ENCODE measurements at regions of chr12 and their contacts with region 1.

Region 1: DNA sequence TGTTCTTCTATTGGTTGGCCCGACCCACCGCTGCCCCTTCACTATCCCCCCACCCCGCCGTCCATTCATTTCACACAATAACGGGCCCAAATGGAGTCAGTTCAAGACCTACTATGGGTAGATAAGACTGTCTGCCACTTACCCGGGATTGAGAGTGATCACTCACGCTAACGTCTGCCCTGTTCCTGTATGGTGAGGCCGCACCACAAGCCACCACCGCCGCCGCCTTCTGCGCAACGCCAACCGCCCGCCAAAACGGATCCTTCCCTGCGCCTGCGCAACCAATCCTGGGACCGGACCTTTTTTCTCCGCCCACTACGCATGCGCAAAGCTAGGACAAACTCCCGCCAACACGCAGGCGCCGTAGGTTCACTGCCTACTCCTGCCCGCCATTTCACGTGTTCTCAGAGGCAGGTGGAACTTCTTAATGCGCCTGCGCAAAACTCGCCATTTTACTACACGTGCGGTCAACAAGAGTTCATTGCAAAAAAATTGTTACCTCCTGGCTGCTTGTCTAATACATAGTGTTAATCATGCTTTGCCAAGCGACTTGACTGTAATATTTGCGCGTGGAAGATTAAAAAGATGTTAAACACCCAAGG is at the start of gene CBX5:
- DNase-seq: peak; percentile 97 to 100 (median 100)
- ATAC-seq: peak; percentile 48 to 52
- H3K4me3 Mint-ChIP-seq: no peak within 1 kb of the TSS
- H3K27ac Mint-ChIP-seq: no peak within 1 kb of the TSS
- H3K4me1 Mint-ChIP-seq: peaks cover 26 to 68% (median 48%) of the 10 kb centered on the region in 4 donors
- H3K27me3 Mint-ChIP-seq: no peaks in the 10 kb centered on the region
- polyA plus RNA-seq, gene CBX5: 23.7 to 34.4 (median 29.4) TPM

Region 2: DNA sequence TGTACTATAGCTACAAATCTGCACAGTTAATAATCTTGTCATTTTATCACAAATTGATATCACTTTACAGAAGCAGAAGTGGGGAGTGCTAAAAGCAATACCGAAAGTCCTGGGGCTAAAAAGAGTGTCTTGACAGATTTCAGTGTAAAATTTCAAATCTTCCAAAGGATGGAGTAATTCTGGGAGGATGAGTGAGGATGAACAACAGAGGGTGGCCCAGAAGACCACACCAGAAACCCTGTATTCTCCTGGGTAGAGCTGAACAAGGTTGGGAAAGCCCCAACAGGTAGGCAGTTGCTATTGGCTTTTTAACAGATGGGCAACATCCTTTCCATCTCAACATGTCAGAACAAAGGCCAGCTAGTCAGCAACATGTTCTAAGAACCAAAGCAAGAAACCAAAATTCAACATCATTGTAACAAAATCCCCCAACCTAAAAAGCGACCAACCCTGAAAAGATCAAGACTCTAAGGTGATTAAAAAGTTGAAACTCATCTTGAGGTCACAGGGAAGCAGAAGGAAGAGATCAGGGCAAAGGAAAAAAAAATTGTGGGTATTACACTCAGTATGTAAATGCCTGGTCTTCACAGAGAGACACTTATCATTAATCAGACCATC is 38.9 kb before region 1 on chr12:
- POLR2A ChIA-PET with region 1: no interaction called
- DNase-seq: no peak
- ATAC-seq: no peak
- H3K4me3 Mint-ChIP-seq: no peak overlapping the region
- H3K27ac Mint-ChIP-seq: peak overlapping the region in 2 of 10 donors; percentile 0 to 15
- H3K4me1 Mint-ChIP-seq: peaks cover 0 to 4% (median 1%) of the 10 kb centered on the region in 4 donors
- H3K27me3 Mint-ChIP-seq: no peaks in the 10 kb centered on the region

Region 3: GRCh38 chr12:54259194-54260011 is 20.6 kb before region 1 on chr12:
- POLR2A ChIA-PET with region 1: interaction called, 32 read pairs
- DNase-seq: peak in 9 of 10 donors; percentile 55 to 87 (median 69)
- ATAC-seq: peak; percentile 96 to 97
- H3K4me3 Mint-ChIP-seq: peak overlapping the region; percentile 72 to 87 (median 82)
- H3K27ac Mint-ChIP-seq: peak overlapping the region; percentile 72 to 92 (median 88)
- H3K4me1 Mint-ChIP-seq: peaks cover 7 to 37% (median 22%) of the 10 kb centered on the region in 4 donors
- H3K27me3 Mint-ChIP-seq: no peaks in the 10 kb centered on the region

Region 4: GRCh38 chr12:54324617-54325441 is 44.9 kb after region 1 on chr12 and contains the start of gene COPZ1:
- POLR2A ChIA-PET with region 1: interaction called, 36 read pairs
- DNase-seq: peak; percentile 78 to 98 (median 92)
- ATAC-seq: peak; percentile 96 to 98
- H3K4me3 Mint-ChIP-seq: peak within 1 kb of the TSS; percentile 90 to 100 (median 98)
- H3K27ac Mint-ChIP-seq: peak within 1 kb of the TSS; percentile 92 to 99 (median 97)
- H3K4me1 Mint-ChIP-seq: peaks cover 18 to 47% (median 42%) of the 10 kb centered on the region in 4 donors
- H3K27me3 Mint-ChIP-seq: no peaks in the 10 kb centered on the region
- polyA plus RNA-seq, gene COPZ1: 128 to 152 (median 132) TPM

Region 5: GRCh38 chr12:54359033-54359761 is 79.2 kb after region 1 on chr12:
- POLR2A ChIA-PET with region 1: interaction called, 37 read pairs
- DNase-seq: peak; percentile 80 to 98 (median 94)
- ATAC-seq: peak; percentile 95 to 97
- H3K4me3 Mint-ChIP-seq: no peak overlapping the region
- H3K27ac Mint-ChIP-seq: no peak overlapping the region
- H3K4me1 Mint-ChIP-seq: peaks cover 12 to 19% (median 16%) of the 10 kb centered on the region in 4 donors
- H3K27me3 Mint-ChIP-seq: no peaks in the 10 kb centered on the region

Region 6: GRCh38 chr12:54497883-54498282 is 217.9 kb after region 1 on chr12:
- POLR2A ChIA-PET with region 1: interaction called, 13 read pairs
- DNase-seq: no peak
- ATAC-seq: peak in 1 of 2 donors; percentile 21
- H3K4me3 Mint-ChIP-seq: peak overlapping the region; percentile 94 to 99 (median 98)
- H3K27ac Mint-ChIP-seq: peak overlapping the region; percentile 91 to 99 (median 97)
- H3K4me1 Mint-ChIP-seq: peaks cover 18 to 51% (median 43%) of the 10 kb centered on the region in 4 donors
- H3K27me3 Mint-ChIP-seq: no peaks in the 10 kb centered on the region